ENCODE measurements at regions of chr16 and their contacts with region 1.

Region 1: GRCh38 chr16:87853411-87854052 is 15.8 kb downstream of the SLC7A5 start:
- DNase-seq: peak; percentile 82 to 94
- ATAC-seq: peak; percentile 15 to 18
- H3K4me3 ChIP-seq: peak overlapping the region; percentile 29
- H3K27ac ChIP-seq: peak overlapping the region; percentile 97 to 99
- H3K4me1 ChIP-seq: peaks cover 98% of the 10 kb centered on the region
- CTCF ChIP-seq: no peak
- EP300 ChIP-seq: peak; percentile 73 to 93; a peak in 3 of 5 replicates
- POLR2A ChIP-seq: 0 out of 2 replicates have a peak, but pooled peaks have one; percentile 19
- RAD21 ChIP-seq: 0 out of 5 replicates have a peak, but pooled peaks of 1 of the 2 experiments have one; percentile 12

Region 2: DNA sequence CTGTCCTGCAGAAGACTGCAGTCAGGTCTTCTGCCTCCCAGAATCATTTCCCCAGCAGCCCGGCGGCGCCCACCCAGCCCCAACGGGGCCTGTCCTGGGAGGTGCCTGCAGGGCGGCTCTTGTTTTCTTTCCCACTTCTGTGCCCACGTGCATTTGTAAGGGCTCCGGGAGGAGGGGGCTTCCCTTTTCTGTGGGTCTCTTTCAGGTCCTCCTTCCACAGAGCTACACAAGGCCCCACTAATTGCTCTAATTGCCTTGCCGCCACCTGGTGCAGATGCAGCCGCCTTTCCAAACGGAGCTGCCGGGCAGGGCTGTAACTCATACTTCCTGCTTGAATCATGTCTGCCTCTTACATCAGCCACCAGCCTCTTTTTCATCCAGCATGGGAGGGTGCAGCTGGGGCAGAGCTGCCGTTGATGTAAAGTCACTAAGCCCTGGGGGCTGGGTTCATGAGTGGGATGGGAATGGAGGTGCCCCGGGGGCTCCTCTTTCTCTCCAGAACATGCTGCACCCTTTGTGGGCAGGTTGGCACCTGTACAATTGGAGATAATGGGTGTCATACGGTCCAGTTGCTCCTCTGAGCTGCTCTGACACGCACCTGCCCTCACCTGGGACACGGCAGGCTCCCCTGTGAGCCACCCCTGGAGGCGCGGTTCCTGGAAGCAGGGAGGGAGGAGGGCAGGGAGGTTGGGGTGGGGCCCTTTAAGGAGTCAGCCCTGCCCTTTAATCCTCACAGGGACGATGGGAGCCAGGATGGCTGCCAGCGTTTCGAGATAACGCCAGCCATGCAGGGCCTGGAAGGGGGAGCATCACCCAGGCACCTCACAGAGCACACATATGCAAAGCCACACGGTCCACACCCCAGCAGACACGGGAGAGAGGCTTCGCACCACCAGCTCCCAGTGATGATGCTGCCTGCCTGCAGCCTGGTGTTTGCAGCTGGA is 46.7 kb before region 1 on chr16:
- CTCF ChIA-PET with region 1: interaction called, 16 read pairs
- POLR2A ChIA-PET with region 1: interaction called, 5 read pairs
- DNase-seq: peak; percentile 78 to 85
- ATAC-seq: peak; percentile 78 to 83
- H3K4me3 ChIP-seq: peak overlapping the region; percentile 31
- H3K27ac ChIP-seq: peak overlapping the region; percentile 92 to 97
- H3K4me1 ChIP-seq: peaks cover 45% of the 10 kb centered on the region
- CTCF ChIP-seq: no peak
- EP300 ChIP-seq: peak; percentile 41 to 74; a peak in 2 of 5 replicates
- POLR2A ChIP-seq: peak; percentile 8; the same call in 1 of the 2 replicates
- RAD21 ChIP-seq: peak in 1 of 2 experiments; percentile 33; a peak in 1 of 5 replicates

Region 3: DNA sequence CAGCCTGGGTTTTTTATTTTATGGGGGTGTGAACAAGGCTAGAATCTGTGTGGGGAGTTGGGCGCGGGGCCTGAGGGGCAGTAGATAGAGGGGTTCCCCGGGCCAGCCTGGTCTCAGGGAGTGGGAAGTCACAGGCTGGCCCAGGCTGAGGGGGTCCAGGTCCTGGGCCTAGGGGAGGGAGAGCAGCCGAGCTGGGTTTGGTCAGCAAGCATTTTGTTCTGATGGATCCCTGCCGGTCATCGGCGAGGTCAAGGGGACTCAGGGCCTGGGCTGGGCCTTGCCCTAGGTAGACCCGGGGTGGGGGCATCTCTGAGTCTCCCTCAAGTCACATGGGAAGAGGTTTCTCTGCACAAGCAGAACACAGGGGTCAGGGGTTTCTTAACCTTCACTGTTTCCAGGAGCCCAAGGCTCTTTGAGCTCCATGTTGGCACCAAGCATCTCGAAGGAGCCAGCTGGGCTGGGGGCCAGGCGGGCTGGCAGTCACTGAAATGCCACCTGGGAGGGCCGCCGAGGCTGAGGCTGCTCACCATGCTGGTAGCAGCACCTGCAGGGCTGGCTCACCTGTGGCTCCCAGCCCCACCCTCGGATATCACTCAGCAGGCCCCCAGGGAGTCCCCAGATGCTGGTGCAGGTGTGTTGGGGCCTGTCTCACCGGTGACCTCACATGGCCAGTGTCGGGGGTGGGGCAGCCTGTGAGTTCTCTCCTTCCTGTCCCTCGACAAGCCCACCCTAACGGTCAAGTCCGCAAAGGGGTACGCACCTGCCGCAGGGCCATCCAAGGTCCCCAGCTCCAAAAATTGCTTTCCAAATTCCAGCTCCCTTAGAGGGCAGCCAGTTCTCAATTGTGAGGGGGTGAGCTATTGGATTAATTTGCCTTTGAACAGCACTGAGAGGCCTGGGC is 25.2 kb before region 1 on chr16:
- CTCF ChIA-PET with region 1: interaction called, 200 read pairs
- POLR2A ChIA-PET with region 1: no interaction called
- DNase-seq: peak in 1 of 2 experiments; percentile 81
- ATAC-seq: 0 out of 6 replicates have a peak, but pooled peaks of 1 of the 2 experiments have one; percentile 0
- H3K4me3 ChIP-seq: no peak overlapping the region
- H3K27ac ChIP-seq: peak overlapping the region; percentile 97 to 99
- H3K4me1 ChIP-seq: peaks cover 98% of the 10 kb centered on the region
- CTCF ChIP-seq: no peak
- EP300 ChIP-seq: no peak
- POLR2A ChIP-seq: no peak
- RAD21 ChIP-seq: no peak

Region 4: DNA sequence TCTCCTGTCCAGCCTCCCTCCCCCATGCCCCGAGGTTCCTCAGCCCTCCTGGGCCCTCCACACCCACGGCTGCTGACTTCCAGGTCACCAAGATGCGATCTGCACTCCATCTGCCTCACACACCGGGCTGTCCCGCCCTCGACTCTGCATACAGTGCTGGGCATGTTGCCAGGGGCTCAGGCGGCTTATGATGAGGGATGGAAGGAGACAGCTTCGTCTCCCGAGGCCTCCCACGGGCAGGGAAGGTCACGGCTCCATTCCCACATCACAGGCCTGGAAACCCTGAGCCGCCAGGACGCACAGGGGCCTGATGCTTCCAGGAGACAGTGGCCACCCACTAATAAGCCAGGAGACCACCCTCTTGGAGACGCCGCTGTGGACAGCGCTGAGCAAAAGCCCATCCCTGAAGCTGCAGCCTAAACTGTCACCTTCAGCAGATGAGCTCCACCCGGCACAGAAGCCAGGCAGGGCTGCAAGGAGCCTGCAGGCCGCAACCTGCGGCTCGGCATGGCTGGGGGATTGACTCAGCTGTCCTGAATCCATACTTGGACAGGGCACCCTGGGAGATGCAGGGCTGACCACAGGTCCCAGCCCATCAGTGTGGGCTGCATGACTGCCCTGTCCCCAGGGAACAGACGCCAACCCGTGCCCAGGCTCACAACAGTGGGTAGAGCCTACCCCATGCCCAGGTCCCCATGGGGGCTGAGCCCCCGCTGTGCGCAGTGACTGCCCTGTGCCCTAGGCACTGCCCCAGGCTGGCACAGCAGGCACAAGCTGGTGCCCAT is 18.7 kb before region 1 on chr16:
- CTCF ChIA-PET with region 1: interaction called, 200 read pairs
- POLR2A ChIA-PET with region 1: interaction called, 10 read pairs
- DNase-seq: peak in 1 of 2 experiments; percentile 81
- ATAC-seq: peak; percentile 1 to 2; a peak in 3 of 6 replicates
- H3K4me3 ChIP-seq: no peak overlapping the region; the same call in 2 of the 3 replicates
- H3K27ac ChIP-seq: peak overlapping the region; percentile 97 to 99
- H3K4me1 ChIP-seq: peaks cover 100% of the 10 kb centered on the region
- CTCF ChIP-seq: no peak
- EP300 ChIP-seq: no peak
- POLR2A ChIP-seq: no peak
- RAD21 ChIP-seq: no peak